Aorta (tissue), 5 donors: ENCODE measurements at regions of chr16 and their contacts with region 1.

Region 1: DNA sequence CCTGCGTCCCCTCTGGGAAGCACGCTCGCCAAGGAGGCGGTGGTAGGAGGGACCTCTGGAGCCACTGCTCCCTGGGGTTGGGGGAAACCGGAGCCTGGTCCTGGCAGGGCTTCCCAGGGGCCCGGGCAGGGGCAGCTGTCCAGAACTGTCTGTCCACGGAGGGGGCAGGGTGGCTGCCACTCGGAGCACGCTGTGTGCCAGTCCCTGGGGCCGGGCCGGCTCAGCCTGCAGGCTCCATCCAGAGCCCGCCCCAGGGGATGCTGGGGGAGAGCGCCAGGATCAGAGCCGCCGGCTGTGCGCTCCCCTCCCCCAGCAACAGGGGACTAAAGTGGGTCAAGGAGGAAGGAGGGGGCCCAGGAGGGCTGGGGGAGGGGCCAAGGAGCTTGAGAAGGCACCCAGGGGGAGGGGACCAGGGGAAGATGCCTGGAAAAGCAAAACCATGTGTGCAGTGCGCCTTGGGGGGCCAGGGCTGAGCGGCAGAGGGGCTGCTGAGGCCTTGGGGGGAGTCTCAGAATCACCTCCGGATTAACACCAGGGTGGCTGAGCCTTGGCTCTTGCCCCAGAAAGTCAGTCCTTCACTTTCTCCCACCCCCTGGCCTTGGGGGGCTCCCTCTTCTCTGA is 21.3 kb downstream of the ZNF423 start:
- DNase-seq: peak; percentile 88 to 91
- ATAC-seq: peak; percentile 78
- H3K4me3 ChIP-seq: no peak overlapping the region
- H3K27ac ChIP-seq: peak overlapping the region; percentile 58 to 74
- H3K4me1 ChIP-seq: no peaks in the 10 kb centered on the region
- H3K27me3 ChIP-seq: no peaks in the 10 kb centered on the region

Region 2: GRCh38 chr16:49639739-49640431 is 194.8 kb before region 1 on chr16:
- intact Hi-C with region 1: loop called in 1 of 2 experiments (anchors 10 kb)
- DNase-seq: peak; percentile 78 to 84
- ATAC-seq: peak; percentile 78
- H3K4me3 ChIP-seq: no peak overlapping the region
- H3K27ac ChIP-seq: peak overlapping the region in 1 of 2 donors; percentile 59
- H3K4me1 ChIP-seq: no peaks in the 10 kb centered on the region
- H3K27me3 ChIP-seq: no peaks in the 10 kb centered on the region

Region 3: DNA sequence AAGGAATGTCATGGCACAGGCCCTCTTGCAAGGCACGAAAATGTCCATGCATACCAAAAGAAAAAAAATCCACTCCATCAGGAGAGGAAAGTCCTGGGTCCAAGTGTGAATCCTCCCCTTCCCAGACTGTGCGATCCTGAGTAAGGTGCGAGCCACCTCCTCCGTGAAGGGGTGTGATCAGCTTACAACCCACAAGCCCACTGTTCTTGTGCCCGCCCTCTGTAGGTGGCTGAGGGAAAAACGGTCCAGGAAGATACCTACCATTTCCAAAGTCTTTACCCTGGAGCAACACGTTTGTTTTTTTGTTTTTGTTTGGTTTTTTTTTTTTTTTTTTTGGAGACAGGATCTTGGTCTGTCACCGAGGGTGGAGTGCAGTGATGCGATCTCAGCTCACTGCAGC is 95.3 kb before region 1 on chr16:
- intact Hi-C with region 1: no loop called
- DNase-seq: no peak
- ATAC-seq: no peak
- H3K4me3 ChIP-seq: no peak overlapping the region
- H3K27ac ChIP-seq: no peak overlapping the region
- H3K4me1 ChIP-seq: no peaks in the 10 kb centered on the region
- H3K27me3 ChIP-seq: no peaks in the 10 kb centered on the region

Region 4: DNA sequence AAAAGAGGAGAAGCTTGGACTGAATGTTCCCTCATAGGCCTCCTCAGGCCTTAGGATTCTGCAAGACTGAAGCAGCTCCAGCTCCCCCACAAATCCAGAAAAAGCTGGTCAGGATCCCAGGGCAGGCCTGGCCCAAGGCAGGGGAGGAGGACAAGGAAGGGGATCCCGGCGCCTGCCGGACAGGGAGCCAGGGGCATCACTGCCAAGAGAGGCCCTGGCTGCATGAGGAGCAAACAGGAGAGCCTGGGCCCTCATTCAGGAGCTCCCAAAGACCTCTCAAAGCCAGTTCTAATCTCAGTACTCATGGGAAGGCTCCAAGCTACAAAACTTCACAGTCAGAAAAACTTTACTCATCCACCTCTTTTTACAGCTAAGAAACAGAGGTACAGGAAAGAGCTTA is 46.1 kb before region 1 on chr16:
- intact Hi-C with region 1: loop called (anchors 5 kb)
- DNase-seq: peak in 1 of 2 donors; percentile 70
- ATAC-seq: peak; percentile 77
- H3K4me3 ChIP-seq: no peak overlapping the region
- H3K27ac ChIP-seq: peak overlapping the region; percentile 90 to 91
- H3K4me1 ChIP-seq: peaks cover 0 to 3% of the 10 kb centered on the region in 2 donors
- H3K27me3 ChIP-seq: no peaks in the 10 kb centered on the region